ENCODE measurements at regions of chr1 and their contacts with region 1.

Region 1: DNA sequence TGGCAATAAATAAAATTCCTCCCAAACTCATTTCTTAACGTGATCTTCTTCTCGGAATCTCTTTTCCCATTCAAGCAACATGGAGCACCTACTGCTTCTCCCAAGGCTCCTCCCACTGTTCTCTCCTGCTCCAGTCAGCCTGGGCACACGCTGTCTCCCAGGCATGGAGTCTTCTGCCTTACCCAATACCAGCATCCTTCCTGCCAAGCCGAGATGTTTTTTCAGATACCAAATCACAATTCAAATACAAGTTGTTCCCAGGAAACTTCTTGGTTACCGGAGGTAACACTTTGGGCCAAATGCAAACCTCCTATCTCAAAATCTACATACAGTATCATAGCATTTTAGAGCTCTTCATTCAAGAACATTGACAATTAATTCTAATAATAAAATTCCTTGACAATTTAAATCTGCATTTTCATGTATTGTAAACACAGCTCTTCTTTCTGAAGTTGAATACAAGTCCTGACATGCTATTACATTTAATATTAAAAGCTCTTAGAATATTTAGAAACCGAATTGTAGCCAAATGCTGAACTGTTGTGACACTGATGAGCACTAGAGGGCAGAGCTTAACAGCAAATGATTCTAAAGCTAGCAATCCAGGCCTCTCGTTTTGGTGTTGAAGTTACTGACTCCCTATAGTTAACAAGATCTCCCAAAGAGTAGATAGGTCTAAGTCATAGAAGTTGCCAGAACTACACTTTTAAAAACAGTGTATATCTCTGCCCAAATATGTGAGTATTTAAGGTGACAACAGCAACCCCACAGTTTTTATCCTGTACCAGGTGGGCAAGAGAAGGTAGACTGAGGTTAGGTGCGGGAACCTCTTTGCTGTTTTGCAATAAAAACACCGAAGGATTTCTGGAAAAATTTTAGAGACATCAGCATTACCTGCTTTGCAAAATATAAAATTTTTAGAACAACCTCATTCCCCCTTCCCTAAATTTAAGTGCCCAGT is 52.3 kb downstream of the BCAR3 start:
- DNase-seq: peak; percentile 43
- H3K4me3 Mint-ChIP-seq: no peak overlapping the region
- H3K27ac Mint-ChIP-seq: no peak overlapping the region
- H3K4me1 Mint-ChIP-seq: no peaks in the 10 kb centered on the region
- H3K27me3 Mint-ChIP-seq: peaks cover 1% of the 10 kb centered on the region

Region 2: GRCh38 chr1:93304716-93305138 is 324.7 kb before region 1 on chr1:
- CTCF ChIA-PET with region 1: interaction called, 15 read pairs
- POLR2A ChIA-PET with region 1: no interaction called
- intact Hi-C with region 1: loop called (anchors 2 kb)
- DNase-seq: peak; percentile 26
- H3K4me3 Mint-ChIP-seq: no peak overlapping the region
- H3K27ac Mint-ChIP-seq: no peak overlapping the region
- H3K4me1 Mint-ChIP-seq: no peaks in the 10 kb centered on the region
- H3K27me3 Mint-ChIP-seq: no peaks in the 10 kb centered on the region

Region 3: GRCh38 chr1:93437976-93438605 is 191.3 kb before region 1 on chr1:
- CTCF ChIA-PET with region 1: interaction called, 10 read pairs
- POLR2A ChIA-PET with region 1: no interaction called
- intact Hi-C with region 1: loop called (anchors 1 kb)
- DNase-seq: no peak
- H3K4me3 Mint-ChIP-seq: no peak overlapping the region
- H3K27ac Mint-ChIP-seq: no peak overlapping the region
- H3K4me1 Mint-ChIP-seq: no peaks in the 10 kb centered on the region
- H3K27me3 Mint-ChIP-seq: peaks cover 5% of the 10 kb centered on the region

Region 4: DNA sequence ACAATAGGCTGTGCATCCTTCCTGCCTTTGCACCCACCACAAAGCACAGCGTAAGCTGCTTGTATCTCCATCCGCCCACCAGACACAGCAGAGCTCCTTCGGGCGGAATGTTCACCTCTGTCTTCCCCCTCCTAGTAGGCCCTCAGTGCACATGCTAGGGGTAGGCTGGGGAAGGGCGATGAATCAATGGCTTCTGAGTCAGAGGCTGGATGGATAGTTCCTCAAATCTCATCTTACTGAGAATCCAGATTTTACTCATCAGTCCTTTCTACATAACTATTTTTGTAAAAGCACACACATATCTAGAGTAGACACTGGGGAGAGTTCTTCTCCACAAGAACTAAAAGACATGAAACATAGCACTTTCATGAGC is 21.6 kb before region 1 on chr1:
- CTCF ChIA-PET with region 1: interaction called, 24 read pairs
- POLR2A ChIA-PET with region 1: no interaction called
- intact Hi-C with region 1: no loop called
- DNase-seq: peak; percentile 85
- H3K4me3 Mint-ChIP-seq: no peak overlapping the region
- H3K27ac Mint-ChIP-seq: peak overlapping the region; percentile 43
- H3K4me1 Mint-ChIP-seq: peaks cover 39% of the 10 kb centered on the region
- H3K27me3 Mint-ChIP-seq: peaks cover 21% of the 10 kb centered on the region

Region 5: DNA sequence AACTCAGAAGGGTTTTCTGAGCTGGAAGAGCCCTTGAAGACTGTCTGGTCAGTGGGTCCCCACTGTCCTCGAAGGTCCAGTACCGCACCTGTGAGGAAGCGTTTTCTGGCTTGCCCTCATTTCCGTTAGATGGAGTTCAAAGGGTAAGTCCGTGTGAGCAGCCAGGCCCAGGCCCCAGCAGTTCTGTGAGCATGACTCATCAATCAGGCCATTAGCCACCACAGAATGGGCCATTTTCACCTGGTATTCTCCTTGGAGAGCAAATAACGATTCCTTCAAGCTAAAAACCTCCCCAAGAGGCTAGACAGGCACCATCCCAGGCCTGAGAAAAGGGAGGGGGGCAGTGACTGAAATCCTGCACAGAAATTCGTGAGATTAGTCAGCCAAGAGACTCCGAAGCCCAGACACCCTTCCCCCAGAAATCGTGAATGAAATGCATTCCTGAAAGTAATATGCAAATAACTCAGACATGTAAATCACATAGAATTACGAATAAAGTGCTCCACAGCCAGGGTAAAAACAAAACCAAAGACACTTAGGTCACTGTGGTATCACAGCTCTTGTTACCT is 13.7 kb before region 1 on chr1:
- CTCF ChIA-PET with region 1: interaction called, 32 read pairs
- POLR2A ChIA-PET with region 1: no interaction called
- intact Hi-C with region 1: no loop called
- DNase-seq: peak; percentile 87
- H3K4me3 Mint-ChIP-seq: peak overlapping the region; percentile 45
- H3K27ac Mint-ChIP-seq: peak overlapping the region; percentile 84
- H3K4me1 Mint-ChIP-seq: peaks cover 26% of the 10 kb centered on the region
- H3K27me3 Mint-ChIP-seq: peaks cover 6% of the 10 kb centered on the region

Region 6: GRCh38 chr1:93734999-93735398 is 105.6 kb after region 1 on chr1:
- CTCF ChIA-PET with region 1: interaction called, 11 read pairs
- POLR2A ChIA-PET with region 1: no interaction called
- intact Hi-C with region 1: no loop called
- DNase-seq: no peak
- H3K4me3 Mint-ChIP-seq: no peak overlapping the region
- H3K27ac Mint-ChIP-seq: no peak overlapping the region
- H3K4me1 Mint-ChIP-seq: no peaks in the 10 kb centered on the region
- H3K27me3 Mint-ChIP-seq: no peaks in the 10 kb centered on the region

Measured in activated CD4-positive, alpha-beta memory T cell treated with anti-CD3 and anti-CD28 coated beads for 36 hours (primary cell).